ENCODE measurements at regions of chr22 and their contacts with region 1.

Region 1: GRCh38 chr22:40922484-40923303 is 28.5 kb upstream of the RBX1 start:
- DNase-seq: no peak
- H3K4me3 Mint-ChIP-seq: no peak overlapping the region
- H3K27ac Mint-ChIP-seq: no peak overlapping the region
- H3K4me1 Mint-ChIP-seq: peaks cover 4% of the 10 kb centered on the region
- H3K27me3 Mint-ChIP-seq: no peaks in the 10 kb centered on the region

Region 2: DNA sequence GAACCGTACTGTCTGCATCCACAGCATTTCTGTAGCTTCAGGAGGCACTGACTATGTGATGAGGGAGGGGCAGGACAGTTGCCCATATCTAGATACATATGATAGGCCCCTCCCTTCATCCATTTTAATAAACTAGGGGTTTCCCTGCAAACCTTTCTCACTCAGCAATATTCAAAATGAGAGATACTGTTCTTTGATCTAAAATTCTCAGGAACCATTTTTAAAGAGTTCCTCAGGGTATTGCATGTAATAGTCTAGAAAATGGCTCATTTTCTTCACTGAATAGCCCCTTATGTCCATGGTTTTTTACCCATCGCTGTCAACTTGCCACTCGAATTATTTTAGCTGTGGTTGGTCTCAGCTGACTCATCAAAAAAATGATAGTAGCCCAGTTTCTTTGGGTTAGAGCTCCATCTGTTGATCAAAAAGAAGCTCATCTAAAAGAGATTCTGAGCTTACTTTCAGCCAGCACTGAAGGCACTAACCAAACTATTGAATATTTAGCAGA is 23.8 kb before region 1 on chr22:
- CTCF ChIA-PET with region 1: interaction called, 14 read pairs
- POLR2A ChIA-PET with region 1: no interaction called
- intact Hi-C with region 1: no loop called
- DNase-seq: peak; percentile 41
- H3K4me3 Mint-ChIP-seq: peak overlapping the region; percentile 20
- H3K27ac Mint-ChIP-seq: peak overlapping the region; percentile 88
- H3K4me1 Mint-ChIP-seq: peaks cover 14% of the 10 kb centered on the region
- H3K27me3 Mint-ChIP-seq: no peaks in the 10 kb centered on the region

Region 3: GRCh38 chr22:40950962-40951794 is 28.5 kb after region 1 on chr22 and contains the start of gene RBX1:
- CTCF ChIA-PET with region 1: interaction called, 22 read pairs
- POLR2A ChIA-PET with region 1: interaction called, 9 read pairs
- intact Hi-C with region 1: no loop called
- DNase-seq: peak; percentile 99
- H3K4me3 Mint-ChIP-seq: peak within 1 kb of the TSS; percentile 99
- H3K27ac Mint-ChIP-seq: peak within 1 kb of the TSS; percentile 99
- H3K4me1 Mint-ChIP-seq: peaks cover 30% of the 10 kb centered on the region
- H3K27me3 Mint-ChIP-seq: no peaks in the 10 kb centered on the region
- total RNA-seq, gene RBX1: 96.9 to 99.4 TPM

Region 4: GRCh38 chr22:41091132-41092022 is 168.7 kb after region 1 on chr22:
- CTCF ChIA-PET with region 1: interaction called, 22 read pairs
- POLR2A ChIA-PET with region 1: no interaction called
- intact Hi-C with region 1: loop called (anchors 1 kb)
- DNase-seq: peak; percentile 100
- H3K4me3 Mint-ChIP-seq: peak overlapping the region; percentile 93
- H3K27ac Mint-ChIP-seq: peak overlapping the region; percentile 98
- H3K4me1 Mint-ChIP-seq: peaks cover 25% of the 10 kb centered on the region
- H3K27me3 Mint-ChIP-seq: no peaks in the 10 kb centered on the region

Region 5: DNA sequence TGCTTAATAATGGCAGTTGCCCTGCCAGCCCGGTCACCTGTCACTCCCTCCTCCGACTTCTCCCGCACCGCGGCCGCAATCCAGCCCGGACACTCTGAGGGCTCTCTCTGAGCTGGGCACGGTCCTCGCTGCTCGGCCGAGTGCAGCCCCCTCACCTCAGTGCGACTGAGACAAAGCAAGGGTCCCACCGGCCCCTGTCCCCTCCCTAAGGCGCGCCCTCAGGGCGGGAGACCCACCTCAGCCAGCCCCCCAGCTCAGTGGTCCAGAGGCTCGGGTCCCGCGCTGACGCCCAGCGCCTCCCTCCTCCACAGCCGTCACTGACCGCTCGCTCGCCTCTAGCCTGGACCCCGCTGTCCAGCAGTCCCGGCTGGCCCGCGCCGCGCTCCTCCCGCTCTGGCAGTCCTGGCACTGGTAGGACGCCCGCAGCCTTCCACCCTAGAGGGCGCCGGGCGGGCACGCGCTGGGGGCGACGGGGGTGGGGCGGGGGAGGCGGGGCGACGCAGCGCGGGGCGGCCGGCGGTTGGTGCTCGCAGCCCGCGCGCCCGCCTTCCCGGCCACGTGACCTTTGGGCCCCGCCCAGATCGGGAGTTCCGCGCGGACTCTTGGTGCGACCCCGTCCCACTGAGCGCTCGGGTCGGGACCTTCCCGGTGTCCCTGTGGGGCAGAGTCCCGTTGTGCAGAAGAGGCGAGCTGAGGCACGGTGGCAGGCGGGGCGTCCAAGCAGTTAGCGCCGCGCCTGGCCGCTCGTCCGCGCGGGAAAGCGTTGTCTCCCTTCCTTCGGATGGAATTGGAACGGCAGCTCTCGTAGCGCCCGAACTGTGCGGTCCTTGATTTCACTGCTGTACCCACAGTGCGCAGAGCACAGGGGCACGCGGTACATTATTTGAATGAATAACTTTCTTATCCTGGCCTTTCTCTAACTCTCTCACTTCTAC is 274.6 kb after region 1 on chr22:
- CTCF ChIA-PET with region 1: interaction called, 12 read pairs
- POLR2A ChIA-PET with region 1: no interaction called
- intact Hi-C with region 1: no loop called
- DNase-seq: peak; percentile 85
- H3K4me3 Mint-ChIP-seq: peak overlapping the region; percentile 84
- H3K27ac Mint-ChIP-seq: no peak overlapping the region
- H3K4me1 Mint-ChIP-seq: peaks cover 9% of the 10 kb centered on the region
- H3K27me3 Mint-ChIP-seq: no peaks in the 10 kb centered on the region

Measured in activated CD4-positive, alpha-beta memory T cell treated with anti-CD3 and anti-CD28 coated beads for 36 hours (primary cell).